ENCODE measurements at regions of chr7 and their contacts with region 1.

Region 1: DNA sequence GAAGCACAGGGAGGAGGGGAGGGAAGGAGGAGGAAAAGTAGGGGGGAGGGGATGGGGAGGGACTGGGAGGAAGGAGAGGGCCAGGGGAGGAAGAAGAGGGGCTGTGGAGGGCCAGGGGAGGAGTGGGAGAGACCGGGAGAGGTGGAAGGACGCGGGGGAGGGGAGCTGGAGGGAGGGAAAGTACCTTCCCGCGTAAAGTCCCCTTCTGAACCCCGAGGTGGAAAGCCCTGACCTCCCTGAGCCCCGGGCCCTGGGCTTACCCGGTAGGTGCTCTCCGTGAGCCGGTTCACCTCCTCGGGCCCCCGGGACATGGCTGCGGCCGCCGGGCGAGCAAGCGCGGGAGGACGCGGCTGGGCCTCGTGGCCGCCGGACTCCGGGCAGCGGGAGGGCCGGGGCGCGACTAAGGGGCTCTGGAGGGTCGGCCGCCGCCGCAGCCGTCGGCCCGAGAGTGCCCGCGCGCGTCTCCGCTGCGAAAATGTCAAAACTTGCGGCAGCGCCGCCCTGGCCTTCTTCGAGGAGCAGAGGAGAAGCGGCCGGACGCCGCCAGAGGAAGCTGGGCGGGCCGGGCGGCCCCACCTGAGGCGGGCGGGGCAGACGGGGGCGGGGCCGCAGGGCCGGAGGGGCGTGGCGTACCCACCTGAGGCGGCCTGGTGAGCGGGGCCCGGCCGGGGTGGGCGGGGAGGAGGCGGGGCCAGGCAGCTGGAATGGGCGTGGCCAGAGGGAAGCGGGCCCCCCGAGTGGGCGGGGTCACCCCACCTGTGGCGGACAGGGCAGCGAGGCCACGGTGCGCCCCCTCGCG is at the start of gene BAIAP2L1:
- DNase-seq: peak; percentile 97
- CTCF ChIP-seq: no peak

Region 2: GRCh38 chr7:98294796-98295382 is 105.9 kb before region 1 on chr7:
- CTCF ChIA-PET with region 1: interaction called, 54 read pairs
- POLR2A ChIA-PET with region 1: no interaction called
- DNase-seq: peak; percentile 80
- CTCF ChIP-seq: peak; percentile 70

Region 3: GRCh38 chr7:98387544-98388224 is 13.1 kb before region 1 on chr7:
- CTCF ChIA-PET with region 1: interaction called, 12 read pairs
- POLR2A ChIA-PET with region 1: no interaction called
- DNase-seq: no peak
- CTCF ChIP-seq: no peak

Region 4: DNA sequence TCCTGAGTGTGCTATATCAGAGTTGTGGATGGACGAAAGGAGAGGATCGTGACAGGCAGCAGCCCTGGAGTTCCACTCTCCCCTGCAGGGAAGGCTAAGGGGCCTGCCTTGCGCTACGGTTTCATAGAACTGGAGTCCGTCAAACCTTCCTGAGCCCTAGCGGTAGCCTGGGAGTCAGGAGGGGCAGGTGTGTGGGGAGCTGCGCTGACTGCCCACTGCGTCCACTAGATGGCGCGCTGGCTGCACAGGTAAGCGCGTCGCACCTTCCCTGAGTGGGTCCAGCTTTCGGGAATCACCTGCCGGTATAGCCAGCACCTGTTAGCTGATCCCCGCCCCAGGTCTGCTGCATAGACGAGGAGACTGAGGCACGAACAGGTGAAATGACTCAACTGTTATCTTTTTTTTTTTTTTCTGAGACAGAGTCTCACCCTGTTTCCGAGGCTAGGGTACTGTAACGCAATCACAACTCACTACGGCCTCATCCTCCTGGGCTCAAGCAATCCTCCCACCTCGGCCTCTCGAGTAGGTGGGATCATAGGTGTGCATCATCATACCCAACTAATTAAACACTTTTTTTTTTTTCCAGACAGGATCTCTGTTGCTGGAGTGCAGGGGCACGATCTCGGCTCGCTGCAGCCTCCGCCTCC is 20.3 kb after region 1 on chr7:
- CTCF ChIA-PET with region 1: interaction called, 22 read pairs
- POLR2A ChIA-PET with region 1: no interaction called
- DNase-seq: peak; percentile 82
- CTCF ChIP-seq: peak; percentile 95

Measured in GM10248 (cell line).